CD8-positive, alpha-beta T cell (primary cell): ENCODE measurements at regions of chr3 and their contacts with region 1.

Region 1: GRCh38 chr3:11770477-11771391 is 76.0 kb downstream of the TAMM41 start:
- DNase-seq: peak; percentile 59 to 92 (median 74)
- ATAC-seq: peak; percentile 100
- H3K4me3 ChIP-seq: peak overlapping the region; percentile 8 to 14
- H3K4me3 Mint-ChIP-seq: peak overlapping the region; percentile 46
- H3K27ac ChIP-seq: peak overlapping the region; percentile 17 to 20
- H3K27ac Mint-ChIP-seq: peak overlapping the region; percentile 86
- H3K4me1 ChIP-seq: peaks cover 14% of the 10 kb centered on the region
- H3K4me1 Mint-ChIP-seq: peaks cover 19% of the 10 kb centered on the region
- H3K27me3 ChIP-seq: no peaks in the 10 kb centered on the region
- H3K27me3 Mint-ChIP-seq: no peaks in the 10 kb centered on the region
- CTCF ChIP-seq: no peak

Region 2: DNA sequence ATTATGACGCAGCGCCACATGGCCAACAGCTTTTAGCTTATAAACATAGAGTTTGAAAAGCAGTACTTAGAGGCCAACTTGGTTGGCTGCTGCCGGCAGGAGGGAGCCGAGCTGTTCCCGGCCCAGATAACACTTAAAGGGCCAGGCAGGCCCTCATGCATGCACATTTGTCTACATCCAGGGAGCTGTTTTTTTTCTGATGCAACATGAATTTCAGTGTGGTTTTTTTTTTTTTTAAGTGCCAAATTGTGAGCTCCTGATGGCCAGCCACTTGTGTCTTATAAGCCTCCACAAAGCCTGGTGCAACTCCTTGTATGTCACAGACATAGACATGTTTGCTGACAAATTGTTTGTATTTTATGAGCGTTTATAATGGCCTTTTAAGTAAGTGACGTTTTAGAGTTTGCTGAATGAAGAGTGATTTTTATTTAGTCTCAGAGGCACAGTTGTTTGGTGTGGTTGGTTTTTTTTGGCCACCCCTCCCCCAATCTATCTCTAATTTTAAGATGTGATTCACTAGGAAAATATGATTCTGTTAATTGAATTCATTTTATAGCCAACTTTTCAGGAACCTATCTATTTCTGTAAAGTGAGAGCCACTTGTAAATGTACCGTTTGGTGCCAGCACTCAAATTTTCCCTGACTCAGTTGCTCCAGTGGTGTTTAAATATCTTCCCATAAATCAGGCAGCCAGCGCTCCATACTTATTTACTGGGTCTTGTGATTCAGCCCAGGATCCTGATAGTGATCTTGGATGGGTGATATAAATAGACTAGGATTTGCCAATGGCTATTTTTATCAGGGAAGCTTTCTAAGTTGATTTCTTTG is 261.3 kb before region 1 on chr3:
- CTCF ChIA-PET with region 1: no interaction called
- POLR2A ChIA-PET with region 1: no interaction called
- intact Hi-C with region 1: no loop called
- DNase-seq: no peak
- ATAC-seq: no peak
- H3K4me3 ChIP-seq: no peak overlapping the region
- H3K4me3 Mint-ChIP-seq: no peak overlapping the region
- H3K27ac ChIP-seq: no peak overlapping the region
- H3K27ac Mint-ChIP-seq: no peak overlapping the region
- H3K4me1 ChIP-seq: no peaks in the 10 kb centered on the region
- H3K4me1 Mint-ChIP-seq: peaks cover under 1% of the 10 kb centered on the region
- H3K27me3 ChIP-seq: no peaks in the 10 kb centered on the region
- H3K27me3 Mint-ChIP-seq: no peaks in the 10 kb centered on the region
- CTCF ChIP-seq: no peak

Region 3: GRCh38 chr3:11719406-11720230 is 51.1 kb before region 1 on chr3:
- CTCF ChIA-PET with region 1: no interaction called
- POLR2A ChIA-PET with region 1: interaction called, 3 read pairs
- intact Hi-C with region 1: loop called (anchors 2 to 5 kb)
- DNase-seq: peak; percentile 54 to 86 (median 79)
- ATAC-seq: peak; percentile 81
- H3K4me3 ChIP-seq: peak overlapping the region; percentile 68 to 73
- H3K4me3 Mint-ChIP-seq: peak overlapping the region; percentile 88
- H3K27ac ChIP-seq: peak overlapping the region in 1 of 2 experiments; percentile 56
- H3K27ac Mint-ChIP-seq: no peak overlapping the region
- H3K4me1 ChIP-seq: peaks cover 15% of the 10 kb centered on the region
- H3K4me1 Mint-ChIP-seq: peaks cover 24% of the 10 kb centered on the region
- H3K27me3 ChIP-seq: no peaks in the 10 kb centered on the region
- H3K27me3 Mint-ChIP-seq: peaks cover 8% of the 10 kb centered on the region
- CTCF ChIP-seq: no peak